OCI-LY7 (cell line): ENCODE measurements at regions of chr6 and their contacts with region 1.

Region 1: DNA sequence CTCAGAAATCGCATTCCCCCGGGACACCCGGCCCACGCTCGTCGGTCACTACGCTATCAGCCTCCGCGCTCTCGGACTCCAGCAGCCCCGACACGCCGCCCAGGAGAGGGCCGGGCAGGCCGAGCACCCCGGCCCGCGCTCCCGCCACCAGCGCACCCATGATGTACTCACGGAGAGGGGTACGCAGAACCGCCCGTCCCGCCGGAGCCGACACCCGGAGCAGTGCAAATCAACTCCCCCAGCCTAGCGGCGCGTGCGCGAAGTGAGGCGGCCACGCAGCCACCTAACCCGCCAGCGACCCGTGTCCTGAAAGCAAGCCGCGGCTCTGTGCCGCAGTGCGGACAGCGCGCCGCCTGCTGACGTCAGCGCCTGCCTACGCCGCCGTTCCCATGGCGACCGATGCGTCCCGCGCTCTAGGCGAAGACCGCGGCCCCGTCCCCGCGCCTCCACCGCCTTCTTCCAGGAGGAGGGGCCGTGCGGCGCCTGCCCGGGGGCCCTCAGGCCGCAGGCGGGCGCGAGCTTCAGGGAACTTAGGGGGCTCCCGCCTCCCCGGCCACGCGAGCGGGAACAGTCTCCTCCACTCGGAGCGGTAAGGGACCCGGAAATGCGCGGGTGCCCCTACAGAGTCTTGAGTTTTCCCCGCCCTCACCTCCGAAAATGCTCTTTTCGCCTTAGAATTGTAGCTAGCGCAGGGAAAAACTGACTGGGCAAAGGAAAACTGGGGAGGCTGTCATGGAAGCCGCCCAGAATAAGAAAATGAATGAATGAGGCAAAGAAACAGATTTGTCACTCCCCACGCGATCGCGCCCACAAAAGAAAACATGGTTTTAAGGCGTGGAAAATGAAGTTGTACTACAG is at the start of gene AHI1:
- DNase-seq: peak; percentile 95
- H3K4me3 ChIP-seq: peak within 1 kb of the TSS; percentile 85
- H3K27ac ChIP-seq: peak within 1 kb of the TSS; percentile 60
- H3K4me1 ChIP-seq: peaks cover 29% of the 10 kb centered on the region
- CTCF ChIP-seq: 0 out of 2 replicates have a peak, but pooled peaks have one; percentile 13
- total RNA-seq, gene AHI1: 21.4 and 25.3 TPM in 2 replicates

Region 2: DNA sequence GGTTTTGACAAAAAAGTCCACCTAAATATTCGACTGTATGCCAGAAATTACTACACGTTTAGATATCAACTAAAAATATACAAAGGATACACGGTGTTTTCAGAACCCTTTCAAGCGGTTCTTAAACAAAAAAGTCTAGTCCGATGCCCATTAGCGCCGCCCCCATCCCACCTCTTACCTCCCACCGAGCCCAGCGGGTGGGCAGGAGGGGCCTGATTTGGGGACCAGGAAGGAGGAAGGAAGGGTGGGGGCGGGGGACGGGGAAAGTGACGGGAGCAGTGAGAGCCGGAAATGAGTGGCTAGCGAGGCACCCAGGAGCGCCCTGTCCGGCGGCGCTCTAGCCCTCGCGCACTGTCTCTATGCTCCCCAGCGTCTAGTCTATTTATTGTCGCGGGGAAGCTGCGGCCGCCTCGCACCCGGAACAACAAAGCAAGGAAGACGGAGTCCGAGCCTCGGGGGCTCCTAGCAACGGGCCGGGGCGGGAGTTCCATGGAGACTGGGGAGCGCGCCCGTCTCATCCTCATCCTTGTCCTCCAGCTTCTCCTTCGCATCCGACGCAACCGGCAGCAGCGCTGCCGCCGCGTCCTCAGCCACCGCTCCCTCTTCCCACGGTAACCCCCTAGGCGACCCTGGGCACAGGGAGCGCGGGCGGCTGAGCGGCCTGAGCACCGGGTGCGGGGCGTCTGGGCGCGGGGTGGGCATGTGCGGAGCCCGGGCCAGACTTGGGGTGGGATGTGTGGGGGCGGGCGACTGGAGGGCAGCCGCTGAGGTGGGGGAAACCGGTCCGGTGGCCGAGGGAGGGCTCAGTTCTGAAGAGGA is 1544.6 kb before region 1 on chr6 and contains the start of gene TBPL1:
- CTCF ChIA-PET with region 1: no interaction called
- POLR2A ChIA-PET with region 1: no interaction called
- intact Hi-C with region 1: loop called (anchors 10 kb)
- DNase-seq: peak; percentile 96
- H3K4me3 ChIP-seq: peak within 1 kb of the TSS; percentile 99
- H3K27ac ChIP-seq: peak within 1 kb of the TSS; percentile 77
- H3K4me1 ChIP-seq: peaks cover 45% of the 10 kb centered on the region
- CTCF ChIP-seq: no peak
- total RNA-seq, gene TBPL1: 25.9 and 27.8 TPM in 2 replicates

Region 3: DNA sequence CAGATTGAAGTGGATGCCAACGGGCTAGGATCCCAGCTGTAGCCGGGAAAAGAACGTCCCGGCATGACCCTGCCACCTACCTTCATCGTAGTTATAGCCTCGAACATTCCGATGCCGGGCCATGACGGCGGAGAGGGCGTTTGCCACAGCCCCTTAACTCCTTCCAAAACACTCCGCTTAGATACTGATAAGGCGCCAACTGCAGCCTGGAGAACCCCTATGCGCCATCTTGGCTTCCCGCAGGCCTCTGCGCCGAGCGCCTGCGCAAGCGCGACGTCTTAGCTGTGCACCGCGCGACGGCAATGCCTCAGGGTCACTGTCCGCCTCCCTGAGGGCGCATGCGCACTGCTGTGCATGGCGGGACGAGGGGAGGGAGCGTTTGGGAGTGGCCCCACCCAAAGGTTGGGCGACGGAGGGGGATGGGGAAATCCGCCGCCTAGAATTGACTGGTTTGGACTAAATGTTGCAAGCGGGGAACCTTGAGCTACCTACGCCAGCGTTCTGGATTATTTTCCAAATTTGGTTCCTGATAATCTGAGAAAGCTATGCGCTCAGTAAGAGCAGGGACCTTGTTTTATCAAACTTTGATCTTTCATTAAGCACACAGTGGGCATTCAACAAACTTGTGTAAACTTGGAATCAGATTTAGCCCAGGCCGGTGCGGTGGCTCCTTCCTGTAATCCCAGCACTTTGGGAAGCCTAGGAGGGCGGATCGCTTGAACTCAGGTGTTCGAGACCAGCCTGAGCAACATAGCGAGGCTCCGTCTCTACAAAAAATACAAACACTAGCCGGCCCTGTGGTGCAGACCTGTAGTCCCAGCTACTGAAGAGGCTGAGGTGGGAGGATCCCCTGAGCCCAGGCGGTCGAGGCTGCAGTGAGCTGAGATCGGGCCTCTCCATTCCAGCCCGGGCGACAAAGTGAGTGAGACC is 442.8 kb before region 1 on chr6 and contains the start of gene HBS1L:
- CTCF ChIA-PET with region 1: no interaction called
- POLR2A ChIA-PET with region 1: no interaction called
- intact Hi-C with region 1: loop called (anchors 5 kb)
- DNase-seq: peak; percentile 99
- H3K4me3 ChIP-seq: peak within 1 kb of the TSS; percentile 93
- H3K27ac ChIP-seq: peak within 1 kb of the TSS; percentile 64
- H3K4me1 ChIP-seq: peaks cover 26% of the 10 kb centered on the region
- CTCF ChIP-seq: no peak
- total RNA-seq, gene HBS1L: 82.9 and 95.4 TPM in 2 replicates

Region 4: DNA sequence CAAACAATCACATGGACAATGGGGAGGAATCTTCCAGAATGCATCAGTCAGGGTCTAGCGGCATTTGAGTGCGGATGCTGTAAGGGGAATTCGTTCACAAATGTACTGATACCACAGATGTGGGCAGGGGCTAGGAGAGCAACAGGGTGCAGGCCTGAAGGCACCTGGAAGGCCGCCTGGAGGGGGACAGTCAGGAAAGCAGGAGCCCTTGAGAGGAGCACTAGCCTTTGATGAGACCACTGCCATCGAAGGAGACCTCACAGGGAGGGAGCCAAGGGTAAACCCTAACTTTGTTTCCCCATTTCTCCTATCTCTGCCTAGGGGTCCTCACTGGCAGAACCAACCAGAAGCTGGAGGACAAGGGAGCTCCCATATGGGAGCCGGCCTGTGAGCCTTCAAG is 278.3 kb before region 1 on chr6:
- CTCF ChIA-PET with region 1: interaction called, 11 read pairs
- POLR2A ChIA-PET with region 1: no interaction called
- intact Hi-C with region 1: no loop called
- DNase-seq: no peak
- H3K4me3 ChIP-seq: no peak overlapping the region
- H3K27ac ChIP-seq: no peak overlapping the region
- H3K4me1 ChIP-seq: no peaks in the 10 kb centered on the region
- CTCF ChIP-seq: no peak

Region 5: GRCh38 chr6:135451693-135452092 is 45.9 kb before region 1 on chr6:
- CTCF ChIA-PET with region 1: no interaction called
- POLR2A ChIA-PET with region 1: interaction called, 6 read pairs
- intact Hi-C with region 1: loop called (anchors 2 kb)
- DNase-seq: peak; percentile 68
- H3K4me3 ChIP-seq: no peak overlapping the region
- H3K27ac ChIP-seq: no peak overlapping the region
- H3K4me1 ChIP-seq: no peaks in the 10 kb centered on the region
- CTCF ChIP-seq: peak; percentile 96

Region 6: GRCh38 chr6:135465307-135465706 is 32.3 kb before region 1 on chr6:
- CTCF ChIA-PET with region 1: no interaction called
- POLR2A ChIA-PET with region 1: interaction called, 16 read pairs
- intact Hi-C with region 1: loop called (anchors 1 kb)
- DNase-seq: peak; percentile 44
- H3K4me3 ChIP-seq: peak overlapping the region; percentile 18
- H3K27ac ChIP-seq: peak overlapping the region; percentile 54
- H3K4me1 ChIP-seq: peaks cover 33% of the 10 kb centered on the region
- CTCF ChIP-seq: no peak

Region 7: DNA sequence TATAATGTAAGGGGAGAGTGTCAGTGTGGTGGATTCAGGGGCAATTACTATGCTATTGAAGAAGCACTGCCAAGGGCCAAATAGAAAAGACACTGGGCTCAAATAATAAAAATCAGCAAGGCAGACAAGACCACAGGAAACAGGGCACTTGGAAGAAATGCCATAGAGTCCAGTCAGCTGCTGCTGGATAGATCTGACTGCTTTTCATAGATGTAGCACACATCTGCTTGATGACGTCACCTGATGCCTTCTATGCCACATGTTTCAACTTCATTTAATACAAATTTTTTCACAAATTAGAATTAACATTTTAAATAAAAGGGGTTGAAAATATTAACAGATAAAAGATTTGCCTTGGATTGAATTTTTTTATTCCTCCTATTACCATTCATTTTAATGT is 23.8 kb after region 1 on chr6:
- CTCF ChIA-PET with region 1: no interaction called
- POLR2A ChIA-PET with region 1: no interaction called
- intact Hi-C with region 1: no loop called
- DNase-seq: no peak
- H3K4me3 ChIP-seq: no peak overlapping the region
- H3K27ac ChIP-seq: no peak overlapping the region
- H3K4me1 ChIP-seq: no peaks in the 10 kb centered on the region
- CTCF ChIP-seq: no peak

Region 8: GRCh38 chr6:135657207-135657606 is 159.6 kb after region 1 on chr6:
- CTCF ChIA-PET with region 1: no interaction called
- POLR2A ChIA-PET with region 1: no interaction called
- intact Hi-C with region 1: no loop called
- DNase-seq: no peak
- H3K4me3 ChIP-seq: no peak overlapping the region
- H3K27ac ChIP-seq: no peak overlapping the region
- H3K4me1 ChIP-seq: no peaks in the 10 kb centered on the region
- CTCF ChIP-seq: no peak

Region 9: DNA sequence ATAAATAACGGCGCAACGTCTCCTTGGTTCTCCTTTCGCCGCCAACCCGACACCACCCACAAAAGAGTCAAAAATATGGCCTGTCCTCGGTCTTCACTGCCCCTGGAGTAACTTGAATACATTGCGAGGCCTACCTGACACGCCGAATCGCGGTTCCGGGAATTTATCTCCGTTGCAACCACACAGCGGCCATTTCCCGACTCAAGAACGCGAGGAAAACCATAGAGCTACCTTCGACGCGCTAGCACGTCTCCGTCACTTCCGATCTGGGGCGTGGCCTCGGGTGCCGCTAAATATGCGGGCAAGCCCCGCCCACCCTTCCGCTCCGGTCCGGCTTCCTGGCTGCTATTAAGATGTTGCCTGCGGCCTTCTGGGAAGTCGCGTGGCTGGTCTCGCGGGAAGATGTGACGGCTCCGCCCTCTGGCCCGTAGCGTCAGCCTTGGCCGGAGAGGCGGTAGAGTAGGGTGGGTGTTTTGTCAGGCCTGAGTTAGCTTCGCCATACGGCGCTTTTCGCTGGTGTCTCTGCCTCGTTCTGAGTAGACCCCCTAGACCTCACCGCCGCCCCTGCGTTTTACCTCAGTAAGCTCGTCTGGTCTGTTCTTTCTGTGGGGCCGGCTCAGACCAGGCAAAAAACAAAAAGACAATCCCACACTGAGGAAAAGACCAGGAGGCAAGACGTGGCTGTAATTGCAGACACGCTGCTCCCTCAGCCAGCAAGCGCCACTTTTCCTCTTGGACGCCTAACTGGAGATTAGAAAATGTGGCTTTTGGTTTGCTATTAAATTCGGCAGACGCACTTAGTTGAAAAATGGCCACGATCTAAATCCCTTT is 792.2 kb after region 1 on chr6 and contains the start of gene BCLAF1:
- CTCF ChIA-PET with region 1: no interaction called
- POLR2A ChIA-PET with region 1: interaction called, 4 read pairs
- intact Hi-C with region 1: loop called (anchors 1 kb)
- DNase-seq: peak; percentile 99
- H3K4me3 ChIP-seq: peak within 1 kb of the TSS; percentile 88
- H3K27ac ChIP-seq: peak within 1 kb of the TSS; percentile 97
- H3K4me1 ChIP-seq: peaks cover 42% of the 10 kb centered on the region
- CTCF ChIP-seq: peak; percentile 34; the same call in 1 of the 2 replicates
- total RNA-seq, gene BCLAF1: 130 and 228 TPM in 2 replicates